HEK293T (cell line): ENCODE measurements at regions of chr16 and their contacts with region 1.

Region 1: GRCh38 chr16:73095885-73096421 is 48.0 kb upstream of the ZFHX3 start:
- DNase-seq: peak; percentile 80

Region 2: DNA sequence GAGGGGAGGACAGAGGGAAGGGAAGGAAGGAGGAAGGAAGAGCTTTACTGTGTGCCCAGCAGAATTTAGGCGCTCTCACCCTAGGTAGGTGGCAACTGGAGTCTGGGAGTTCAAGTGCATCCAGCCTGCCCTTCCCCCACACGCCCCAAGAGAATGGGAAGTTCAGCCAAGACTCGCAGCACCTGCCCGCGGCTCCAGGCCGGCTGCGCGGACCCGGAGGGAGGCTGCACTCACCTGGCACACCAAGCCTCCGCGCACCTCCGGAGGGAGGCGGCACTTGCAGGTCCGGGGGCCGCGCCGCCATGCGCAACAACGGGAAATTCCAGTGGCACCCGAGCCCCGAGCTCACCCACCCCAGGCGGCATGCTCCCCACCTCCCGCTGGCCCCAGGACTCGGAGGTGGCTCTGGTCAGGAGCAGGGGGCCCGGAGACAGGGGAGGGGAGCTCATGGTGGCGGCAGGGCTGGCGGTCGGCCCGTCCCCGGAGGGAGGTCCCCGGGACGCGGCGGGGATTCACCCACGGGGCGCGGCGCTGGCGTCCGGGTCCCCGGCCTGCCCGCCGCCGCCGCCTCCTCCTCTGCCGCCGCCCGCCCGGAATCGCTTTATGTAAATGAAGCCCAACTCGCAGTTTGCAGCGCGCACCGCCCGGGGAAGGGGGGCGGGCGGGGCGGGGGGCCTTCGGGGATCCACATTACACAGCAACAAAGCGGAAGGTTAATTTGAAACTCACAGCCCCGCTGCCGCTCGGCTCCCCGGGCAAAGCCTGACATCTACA is 48.2 kb before region 1 on chr16 and contains the start of gene ZFHX3:
- CTCF ChIA-PET with region 1: no interaction called
- POLR2A ChIA-PET with region 1: no interaction called
- DNase-seq: no peak

Region 3: GRCh38 chr16:73064205-73064988 is 31.6 kb before region 1 on chr16:
- CTCF ChIA-PET with region 1: no interaction called
- POLR2A ChIA-PET with region 1: no interaction called
- DNase-seq: no peak

Region 4: GRCh38 chr16:73106326-73106725 is 10.4 kb after region 1 on chr16:
- CTCF ChIA-PET with region 1: no interaction called
- POLR2A ChIA-PET with region 1: no interaction called
- DNase-seq: no peak

Region 5: DNA sequence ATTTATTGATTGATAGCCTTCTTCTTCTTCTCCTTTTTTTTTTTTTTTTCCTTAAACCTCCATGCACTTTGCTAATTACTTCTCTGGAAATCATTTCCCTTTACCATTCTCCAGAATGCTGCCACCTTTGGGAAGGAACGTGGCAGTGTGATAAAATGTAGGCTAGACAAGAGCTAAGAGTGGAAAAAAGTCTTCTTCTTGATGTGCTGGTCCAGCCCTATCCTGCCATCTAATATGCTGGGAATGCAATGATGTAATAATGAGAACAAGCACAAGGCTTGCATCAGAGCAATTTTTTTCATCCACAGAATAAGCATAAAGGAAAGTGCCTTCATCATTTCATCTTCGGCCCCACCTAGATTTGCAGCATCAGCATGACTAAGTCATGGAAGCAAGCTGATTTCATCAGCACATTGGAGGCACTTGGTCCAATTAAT is 80.6 kb after region 1 on chr16:
- CTCF ChIA-PET with region 1: interaction called, 10 read pairs
- POLR2A ChIA-PET with region 1: interaction called, 3 read pairs
- DNase-seq: no peak